ENCODE measurements at regions of chr3 and their contacts with region 1.

Region 1: GRCh38 chr3:123036352-123037014 is 8.9 kb upstream of the SEMA5B start:
- DNase-seq: peak; percentile 89
- H3K4me3 Mint-ChIP-seq: no peak overlapping the region
- H3K27ac Mint-ChIP-seq: no peak overlapping the region
- H3K4me1 Mint-ChIP-seq: peaks cover 19% of the 10 kb centered on the region
- H3K27me3 Mint-ChIP-seq: peaks cover 28% of the 10 kb centered on the region
- CTCF ChIP-seq: no peak

Region 2: DNA sequence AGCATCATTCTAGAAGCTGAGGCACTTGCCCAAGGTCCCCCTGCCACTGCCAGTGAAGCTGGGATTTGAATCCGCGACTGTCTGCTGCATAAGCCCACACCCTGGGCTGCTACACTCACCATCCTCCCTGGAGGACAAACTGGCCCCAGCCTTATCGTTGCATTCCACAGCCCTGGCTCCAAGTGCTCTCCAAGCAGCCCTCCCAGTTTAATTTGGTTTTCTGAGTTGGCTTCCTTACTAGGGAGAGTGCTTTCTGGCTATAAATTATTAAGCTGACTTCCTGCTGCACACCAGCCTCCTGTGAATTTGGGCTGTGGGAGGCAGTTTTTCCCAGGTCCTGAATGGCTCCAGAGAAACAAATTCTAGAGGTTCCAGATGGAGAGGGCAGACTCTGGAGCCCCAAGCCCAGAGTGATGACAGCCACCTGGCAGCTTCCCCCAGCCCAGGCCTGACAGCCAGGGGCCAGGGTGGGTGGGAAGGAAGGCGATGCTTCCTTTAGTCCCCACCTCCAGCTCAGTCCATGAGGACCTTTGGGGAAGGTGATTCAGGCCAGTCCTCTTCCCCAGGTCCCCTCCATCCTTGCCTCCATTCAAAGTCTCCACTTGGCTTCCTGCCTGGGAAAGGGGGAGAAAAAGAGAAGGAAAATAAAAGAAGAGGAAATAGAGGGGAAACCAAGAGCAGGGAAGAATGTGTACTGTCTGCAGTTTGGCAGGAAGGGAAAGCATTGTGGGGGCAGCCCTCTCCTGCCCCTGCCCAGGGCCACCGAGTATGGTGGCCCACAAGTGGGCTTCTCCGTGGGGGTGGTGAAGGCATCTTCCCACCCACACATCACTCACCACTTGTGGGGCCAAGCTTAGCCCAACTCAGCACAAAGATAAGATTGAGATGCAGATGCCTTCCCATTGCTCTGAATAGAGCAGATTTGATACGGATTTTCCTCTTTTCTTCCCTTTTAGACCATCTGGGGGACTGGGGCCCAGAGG is 78.5 kb before region 1 on chr3:
- CTCF ChIA-PET with region 1: no interaction called
- POLR2A ChIA-PET with region 1: no interaction called
- intact Hi-C with region 1: no loop called
- DNase-seq: no peak
- H3K4me3 Mint-ChIP-seq: no peak overlapping the region
- H3K27ac Mint-ChIP-seq: no peak overlapping the region
- H3K4me1 Mint-ChIP-seq: no peaks in the 10 kb centered on the region
- H3K27me3 Mint-ChIP-seq: peaks cover 19% of the 10 kb centered on the region
- CTCF ChIP-seq: no peak

Region 3: GRCh38 chr3:123053106-123053505 is 16.6 kb after region 1 on chr3:
- CTCF ChIA-PET with region 1: no interaction called
- POLR2A ChIA-PET with region 1: no interaction called
- intact Hi-C with region 1: no loop called
- DNase-seq: no peak
- H3K4me3 Mint-ChIP-seq: no peak overlapping the region
- H3K27ac Mint-ChIP-seq: no peak overlapping the region
- H3K4me1 Mint-ChIP-seq: peaks cover 10% of the 10 kb centered on the region
- H3K27me3 Mint-ChIP-seq: no peaks in the 10 kb centered on the region
- CTCF ChIP-seq: no peak

Region 4: DNA sequence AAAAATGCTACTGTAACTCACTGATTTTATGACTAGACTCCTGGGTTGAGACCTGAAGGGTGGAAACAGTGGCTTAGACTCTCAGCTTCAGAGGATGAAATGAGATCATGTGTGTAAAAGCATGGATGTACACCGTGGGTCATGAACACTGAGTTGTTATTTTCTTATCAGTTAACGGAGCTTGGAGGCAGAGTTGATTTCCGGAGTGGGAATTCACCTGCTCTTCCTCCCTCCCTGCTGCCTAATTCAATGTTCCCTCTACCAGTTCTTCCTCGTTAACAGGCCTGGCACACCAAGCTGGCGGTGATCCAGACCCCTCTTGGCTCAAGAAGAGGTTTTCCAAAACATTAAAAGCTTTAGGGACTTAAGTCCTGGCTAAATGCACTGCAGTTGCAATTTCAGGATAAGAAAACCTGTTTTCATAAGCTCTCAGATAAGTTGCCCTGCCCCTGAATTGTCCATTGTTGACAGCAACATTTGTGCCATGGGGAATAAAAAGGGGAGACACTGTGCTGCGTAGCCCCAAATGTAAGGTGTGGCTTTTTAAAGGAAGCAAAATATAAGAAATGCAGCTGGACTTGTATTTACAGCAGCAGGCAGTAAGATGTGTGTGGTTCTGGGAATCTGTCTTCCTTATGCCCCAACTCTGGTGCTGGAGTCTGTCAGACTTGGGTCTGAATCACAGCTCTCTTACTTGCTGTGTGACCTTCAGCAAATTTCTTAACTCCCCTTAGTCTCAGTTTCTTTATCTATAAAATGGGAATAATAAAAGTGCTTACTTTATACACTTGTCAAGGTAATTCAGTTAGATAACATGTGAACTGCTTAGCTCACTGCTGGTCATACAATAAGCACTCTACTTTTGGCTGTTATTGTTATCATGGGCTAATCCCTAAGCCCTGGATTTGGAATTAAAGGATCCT is 40.3 kb after region 1 on chr3:
- CTCF ChIA-PET with region 1: no interaction called
- POLR2A ChIA-PET with region 1: no interaction called
- intact Hi-C with region 1: loop called (anchors 2 kb)
- DNase-seq: peak; percentile 52
- H3K4me3 Mint-ChIP-seq: no peak overlapping the region
- H3K27ac Mint-ChIP-seq: peak overlapping the region; percentile 40
- H3K4me1 Mint-ChIP-seq: peaks cover 43% of the 10 kb centered on the region
- H3K27me3 Mint-ChIP-seq: no peaks in the 10 kb centered on the region
- CTCF ChIP-seq: no peak

Measured in MCF 10A (cell line).